Naive thymus-derived CD4-positive, alpha-beta T cell (primary cell): ENCODE measurements at regions of chr17 and their contacts with region 1.

Region 1: GRCh38 chr17:29705386-29705785 is 82.7 kb upstream of the CORO6 start:
- DNase-seq: peak in 6 of 9 donors; percentile 16 to 41 (median 24)
- ATAC-seq: peak; percentile 6
- H3K4me3 ChIP-seq: peak overlapping the region; percentile 22
- H3K4me3 Mint-ChIP-seq: peak overlapping the region; percentile 4 to 81 (median 72)
- H3K27ac ChIP-seq: peak overlapping the region; percentile 73
- H3K27ac Mint-ChIP-seq: peak overlapping the region; percentile 85 to 99 (median 96)
- H3K4me1 ChIP-seq: peaks cover 35 to 41% of the 10 kb centered on the region in 2 donors
- H3K4me1 Mint-ChIP-seq: peaks cover 18 to 69% (median 51%) of the 10 kb centered on the region in 7 donors
- H3K27me3 ChIP-seq: no peaks in the 10 kb centered on the region
- H3K27me3 Mint-ChIP-seq: no peaks in the 10 kb centered on the region

Region 2: GRCh38 chr17:29693769-29694168 is 11.6 kb before region 1 on chr17:
- CTCF ChIA-PET with region 1: no interaction called
- POLR2A ChIA-PET with region 1: interaction called, 5 read pairs
- intact Hi-C with region 1: loop called in 1 of 2 experiments (anchors 2 kb)
- DNase-seq: no peak
- ATAC-seq: no peak
- H3K4me3 ChIP-seq: no peak overlapping the region
- H3K4me3 Mint-ChIP-seq: no peak overlapping the region
- H3K27ac ChIP-seq: no peak overlapping the region
- H3K27ac Mint-ChIP-seq: peak overlapping the region in 7 of 9 donors; percentile 20 to 72 (median 57)
- H3K4me1 ChIP-seq: peaks cover 0 to 8% of the 10 kb centered on the region in 2 donors
- H3K4me1 Mint-ChIP-seq: peaks cover 13 to 58% (median 28%) of the 10 kb centered on the region in 7 donors
- H3K27me3 ChIP-seq: no peaks in the 10 kb centered on the region
- H3K27me3 Mint-ChIP-seq: no peaks in the 10 kb centered on the region

Region 3: DNA sequence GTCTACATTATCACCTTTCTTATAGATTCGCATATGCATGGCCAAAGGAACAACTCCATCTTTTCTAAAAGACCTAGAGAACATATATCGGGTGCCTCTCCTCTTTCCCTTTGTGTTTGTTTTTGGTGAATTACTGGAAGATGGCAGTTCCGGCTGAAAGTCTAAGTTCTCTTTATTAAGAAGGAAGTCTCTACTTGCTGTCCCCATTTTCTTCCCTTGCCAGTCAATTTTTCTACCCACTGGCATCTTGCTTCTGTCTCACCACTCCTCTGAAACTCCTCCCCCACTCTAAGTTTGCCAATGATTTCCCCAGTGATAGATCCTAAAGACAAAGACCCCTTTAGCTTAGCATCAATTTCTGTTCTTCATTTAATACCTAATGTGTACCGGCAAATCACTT is 11.2 kb after region 1 on chr17:
- CTCF ChIA-PET with region 1: no interaction called
- POLR2A ChIA-PET with region 1: interaction called, 102 read pairs
- intact Hi-C with region 1: no loop called
- DNase-seq: no peak
- ATAC-seq: no peak
- H3K4me3 ChIP-seq: no peak overlapping the region
- H3K4me3 Mint-ChIP-seq: peak overlapping the region in 1 of 10 donors; percentile 40
- H3K27ac ChIP-seq: no peak overlapping the region
- H3K27ac Mint-ChIP-seq: peak overlapping the region in 8 of 9 donors; percentile 44 to 96 (median 72)
- H3K4me1 ChIP-seq: peaks cover 14 to 32% of the 10 kb centered on the region in 2 donors
- H3K4me1 Mint-ChIP-seq: peaks cover 42 to 98% (median 88%) of the 10 kb centered on the region in 7 donors
- H3K27me3 ChIP-seq: no peaks in the 10 kb centered on the region
- H3K27me3 Mint-ChIP-seq: no peaks in the 10 kb centered on the region